GM12878 (cell line): ENCODE measurements at regions of chrX and their contacts with region 1.

Region 1: DNA sequence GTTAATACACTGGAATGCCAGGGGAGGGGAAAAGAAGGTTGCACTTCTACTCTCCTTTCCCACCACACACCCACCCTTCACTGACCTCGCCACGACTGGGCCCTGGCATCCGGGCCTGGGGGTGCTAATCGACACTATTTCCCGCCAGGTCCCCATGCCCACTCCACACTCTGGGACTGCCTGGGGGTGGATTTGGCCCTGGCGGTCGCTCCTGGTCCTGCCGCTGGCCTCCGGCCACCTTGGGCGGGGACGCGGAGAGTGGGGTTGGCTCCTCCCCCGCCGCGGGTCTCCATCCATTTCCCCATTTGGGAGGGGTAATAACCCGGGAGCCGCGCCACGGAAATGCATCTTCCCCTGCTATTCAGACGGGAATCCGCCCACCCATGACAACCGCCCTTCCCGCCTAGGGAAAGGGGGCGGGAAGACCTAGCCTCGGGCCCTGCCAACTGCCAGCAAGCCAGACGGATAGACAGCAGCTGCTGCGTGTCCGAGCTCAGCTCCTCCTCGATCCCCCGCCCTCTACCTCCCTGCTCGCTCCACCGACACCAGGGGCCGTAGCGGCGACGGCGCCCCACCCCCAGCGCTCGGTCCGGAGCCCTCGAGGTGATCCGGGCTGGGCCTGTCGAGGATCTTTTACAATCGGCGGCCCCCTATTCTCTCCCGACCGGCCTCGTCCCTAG is 78.1 kb downstream of the RLIM start:
- DNase-seq: no peak
- ATAC-seq: peak; percentile 79
- H3K4me3 ChIP-seq: peak overlapping the region; percentile 63
- H3K27ac ChIP-seq: peak overlapping the region; percentile 25
- H3K4me1 ChIP-seq: peaks cover 6% of the 10 kb centered on the region
- H3K27me3 ChIP-seq: no peaks in the 10 kb centered on the region
- CTCF ChIP-seq: peak in 2 of 3 experiments; percentile 22 to 40; a peak in 3 of 6 replicates
- EP300 ChIP-seq: no peak
- POLR2A ChIP-seq: no peak
- RAD21 ChIP-seq: no peak

Region 2: DNA sequence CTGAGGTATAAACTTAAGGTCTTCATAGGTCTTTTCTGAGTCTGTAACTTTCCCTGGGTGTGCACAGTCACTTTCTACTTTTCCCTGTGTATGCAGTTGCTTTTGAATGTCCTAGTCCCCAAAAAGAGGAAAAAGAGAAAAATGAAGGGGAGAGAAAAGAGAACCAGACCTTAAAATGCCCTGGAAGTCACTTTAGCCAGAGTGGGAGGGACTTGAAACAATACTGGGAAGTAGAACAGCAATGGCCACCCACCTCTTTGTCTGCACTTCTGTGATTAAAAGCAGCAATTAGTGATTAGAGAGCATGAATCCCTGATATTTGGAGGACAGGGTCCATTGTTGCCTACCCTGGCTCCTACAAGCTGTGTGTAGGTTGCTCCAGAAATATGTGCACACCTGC is 196.2 kb before region 1 on chrX:
- CTCF ChIA-PET with region 1: no interaction called
- POLR2A ChIA-PET with region 1: no interaction called
- RAD21 ChIA-PET with region 1: no interaction called
- SMC1A ChIA-PET with region 1: no interaction called
- in situ Hi-C with region 1: no loop called
- intact Hi-C with region 1: no loop called
- DNase-seq: no peak
- ATAC-seq: no peak
- H3K4me3 ChIP-seq: no peak overlapping the region
- H3K27ac ChIP-seq: no peak overlapping the region
- H3K4me1 ChIP-seq: no peaks in the 10 kb centered on the region
- H3K27me3 ChIP-seq: no peaks in the 10 kb centered on the region
- CTCF ChIP-seq: no peak
- EP300 ChIP-seq: no peak
- POLR2A ChIP-seq: no peak
- RAD21 ChIP-seq: no peak

Region 3: DNA sequence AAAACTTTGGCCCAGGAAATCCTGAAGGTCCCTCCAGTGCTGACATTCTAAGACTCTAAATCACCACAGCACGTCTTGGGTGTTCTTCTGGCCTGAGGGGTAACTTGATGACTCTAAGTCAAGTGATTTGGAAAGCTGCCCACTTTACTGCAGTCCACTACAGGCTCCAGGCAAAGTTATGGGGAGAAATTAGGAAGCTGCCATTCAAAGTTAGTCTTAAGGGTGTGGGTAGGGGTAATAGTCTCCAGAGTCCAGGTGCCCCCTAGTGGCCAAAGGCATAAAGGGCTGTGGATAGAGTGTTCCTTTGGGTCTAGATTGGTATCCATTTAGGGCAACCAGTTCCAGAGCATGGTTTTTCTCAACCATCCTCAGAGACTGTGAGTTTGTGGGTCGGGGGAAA is 153.7 kb before region 1 on chrX:
- CTCF ChIA-PET with region 1: interaction called, 10 read pairs
- POLR2A ChIA-PET with region 1: no interaction called
- RAD21 ChIA-PET with region 1: interaction called, 3 read pairs
- SMC1A ChIA-PET with region 1: no interaction called
- in situ Hi-C with region 1: no loop called
- intact Hi-C with region 1: no loop called
- DNase-seq: peak; percentile 3
- ATAC-seq: peak; percentile 100
- H3K4me3 ChIP-seq: no peak overlapping the region
- H3K27ac ChIP-seq: no peak overlapping the region
- H3K4me1 ChIP-seq: no peaks in the 10 kb centered on the region
- H3K27me3 ChIP-seq: no peaks in the 10 kb centered on the region
- CTCF ChIP-seq: peak; percentile 80 to 91 (median 85)
- EP300 ChIP-seq: no peak
- POLR2A ChIP-seq: no peak
- RAD21 ChIP-seq: peak; percentile 56

Region 4: GRCh38 chrX:74492720-74493201 is 43.5 kb before region 1 on chrX:
- CTCF ChIA-PET with region 1: interaction called, 21 read pairs
- POLR2A ChIA-PET with region 1: no interaction called
- RAD21 ChIA-PET with region 1: interaction called, 5 read pairs
- SMC1A ChIA-PET with region 1: interaction called, 8 read pairs
- in situ Hi-C with region 1: no loop called
- intact Hi-C with region 1: no loop called
- DNase-seq: no peak
- ATAC-seq: peak; percentile 84
- H3K4me3 ChIP-seq: no peak overlapping the region
- H3K27ac ChIP-seq: no peak overlapping the region
- H3K4me1 ChIP-seq: no peaks in the 10 kb centered on the region
- H3K27me3 ChIP-seq: no peaks in the 10 kb centered on the region
- CTCF ChIP-seq: peak; percentile 26 to 35 (median 28); a peak in 5 of 6 replicates
- EP300 ChIP-seq: no peak
- POLR2A ChIP-seq: no peak
- RAD21 ChIP-seq: peak; percentile 56

Region 5: DNA sequence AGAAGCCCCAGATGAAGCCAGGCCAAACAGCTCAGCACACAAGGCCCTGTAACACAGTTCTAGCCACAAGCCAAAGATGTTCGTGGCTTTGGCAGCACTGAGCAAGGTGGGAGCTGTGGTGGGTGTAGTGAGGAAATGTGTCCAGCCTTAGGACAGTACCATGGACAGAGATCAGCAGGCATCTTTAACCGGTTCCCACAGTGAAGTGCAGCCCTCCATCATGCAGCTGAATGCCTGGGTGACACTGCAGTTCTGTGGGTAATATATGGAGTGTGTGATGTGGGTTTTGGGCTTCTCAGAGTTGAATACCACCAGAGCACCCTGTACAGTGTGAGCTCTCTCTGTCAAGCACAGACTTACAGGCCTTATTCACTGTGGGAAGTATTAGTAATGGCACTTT is 394.9 kb after region 1 on chrX:
- CTCF ChIA-PET with region 1: no interaction called
- POLR2A ChIA-PET with region 1: no interaction called
- RAD21 ChIA-PET with region 1: no interaction called
- SMC1A ChIA-PET with region 1: no interaction called
- in situ Hi-C with region 1: no loop called
- intact Hi-C with region 1: no loop called
- DNase-seq: no peak
- ATAC-seq: peak; percentile 60
- H3K4me3 ChIP-seq: no peak overlapping the region
- H3K27ac ChIP-seq: no peak overlapping the region
- H3K4me1 ChIP-seq: no peaks in the 10 kb centered on the region
- H3K27me3 ChIP-seq: no peaks in the 10 kb centered on the region
- CTCF ChIP-seq: no peak
- EP300 ChIP-seq: no peak
- POLR2A ChIP-seq: no peak
- RAD21 ChIP-seq: no peak